ENCODE measurements at regions of chr7 and their contacts with region 1.

Region 1: GRCh38 chr7:87219545-87220025 is at the start of gene TMEM243:
- DNase-seq: peak; percentile 54
- ATAC-seq: peak; percentile 60
- H3K4me3 ChIP-seq: peak within 1 kb of the TSS; percentile 94
- H3K27ac ChIP-seq: peak within 1 kb of the TSS; percentile 14; the same call in 1 of the 2 replicates
- H3K4me1 ChIP-seq: peaks cover 8% of the 10 kb centered on the region; the same call in 1 of the 2 replicates
- H3K27me3 ChIP-seq: no peaks in the 10 kb centered on the region
- CTCF ChIP-seq: peak; percentile 9; the same call in 1 of the 2 replicates
- total RNA-seq, gene TMEM243: 16.6 and 18.8 TPM in 2 replicates

Region 2: GRCh38 chr7:87027900-87028299 is 191.7 kb before region 1 on chr7:
- CTCF ChIA-PET with region 1: no interaction called
- POLR2A ChIA-PET with region 1: no interaction called
- intact Hi-C with region 1: no loop called
- DNase-seq: no peak
- ATAC-seq: no peak
- H3K4me3 ChIP-seq: no peak overlapping the region
- H3K27ac ChIP-seq: no peak overlapping the region
- H3K4me1 ChIP-seq: no peaks in the 10 kb centered on the region
- H3K27me3 ChIP-seq: no peaks in the 10 kb centered on the region
- CTCF ChIP-seq: no peak

Region 3: GRCh38 chr7:87188930-87189329 is 30.7 kb before region 1 on chr7:
- CTCF ChIA-PET with region 1: no interaction called
- POLR2A ChIA-PET with region 1: no interaction called
- intact Hi-C with region 1: no loop called
- DNase-seq: no peak
- ATAC-seq: no peak
- H3K4me3 ChIP-seq: no peak overlapping the region
- H3K27ac ChIP-seq: no peak overlapping the region
- H3K4me1 ChIP-seq: no peaks in the 10 kb centered on the region
- H3K27me3 ChIP-seq: no peaks in the 10 kb centered on the region
- CTCF ChIP-seq: no peak

Region 4: GRCh38 chr7:87354749-87355148 is 135.2 kb after region 1 on chr7:
- CTCF ChIA-PET with region 1: no interaction called
- POLR2A ChIA-PET with region 1: no interaction called
- intact Hi-C with region 1: no loop called
- DNase-seq: peak; percentile 36
- ATAC-seq: no peak
- H3K4me3 ChIP-seq: no peak overlapping the region
- H3K27ac ChIP-seq: no peak overlapping the region
- H3K4me1 ChIP-seq: peaks cover 8% of the 10 kb centered on the region
- H3K27me3 ChIP-seq: no peaks in the 10 kb centered on the region
- CTCF ChIP-seq: no peak

Region 5: GRCh38 chr7:87404674-87405073 is 185.1 kb after region 1 on chr7:
- CTCF ChIA-PET with region 1: no interaction called
- POLR2A ChIA-PET with region 1: no interaction called
- intact Hi-C with region 1: no loop called
- DNase-seq: no peak
- ATAC-seq: no peak
- H3K4me3 ChIP-seq: no peak overlapping the region
- H3K27ac ChIP-seq: no peak overlapping the region
- H3K4me1 ChIP-seq: peaks cover 5% of the 10 kb centered on the region
- H3K27me3 ChIP-seq: no peaks in the 10 kb centered on the region
- CTCF ChIP-seq: no peak

Region 6: GRCh38 chr7:87876040-87876868 is 656.7 kb after region 1 on chr7 and contains the starts of genes DBF4 and SLC25A40:
- CTCF ChIA-PET with region 1: no interaction called
- POLR2A ChIA-PET with region 1: no interaction called
- intact Hi-C with region 1: loop called (anchors 10 kb)
- DNase-seq: peak; percentile 95
- ATAC-seq: peak; percentile 89
- H3K4me3 ChIP-seq: peak within 1 kb of the TSS; percentile 91
- H3K27ac ChIP-seq: peak within 1 kb of the TSS; percentile 83
- H3K4me1 ChIP-seq: peaks cover 23% of the 10 kb centered on the region
- H3K27me3 ChIP-seq: no peaks in the 10 kb centered on the region
- CTCF ChIP-seq: no peak
- total RNA-seq, gene DBF4: 21.4 and 37.5 TPM in 2 replicates
- total RNA-seq, gene SLC25A40: 4.5 and 5.2 TPM in 2 replicates

Measured in PC-3 (cell line).